Uterus (tissue), 4 donors: ENCODE measurements at regions of chr2 and their contacts with region 1.

Region 1: GRCh38 chr2:28566521-28567041 is 70.7 kb downstream of the PLB1 start:
- DNase-seq: peak; percentile 82 to 90
- H3K4me3 ChIP-seq: peak overlapping the region; percentile 43 to 52
- H3K27ac ChIP-seq: peak overlapping the region; percentile 83 to 84
- H3K4me1 ChIP-seq: no peaks in the 10 kb centered on the region
- H3K27me3 ChIP-seq: no peaks in the 10 kb centered on the region
- CTCF ChIP-seq: peak; percentile 100
- POLR2A ChIP-seq: peak in 1 of 2 donors; percentile 51

Region 2: DNA sequence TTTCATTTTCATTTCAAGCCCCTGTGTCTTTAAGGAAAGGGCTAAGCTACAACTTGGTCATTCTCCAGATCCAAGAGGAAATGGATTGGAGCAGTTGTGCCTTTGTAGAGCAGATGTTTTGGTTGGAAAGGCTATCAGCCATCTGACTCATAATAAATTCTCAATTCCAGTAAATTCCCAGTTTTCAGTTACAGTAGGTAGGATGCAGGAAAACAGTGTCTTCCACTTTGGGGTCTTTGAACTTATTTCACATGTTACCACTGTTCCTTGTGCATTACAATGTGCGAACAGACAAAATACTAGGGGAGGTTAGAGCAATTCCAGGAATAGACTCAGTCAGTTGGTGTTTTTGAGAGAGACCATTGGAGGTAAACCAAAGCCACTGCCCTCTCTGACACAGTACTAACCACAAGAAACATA is 464.1 kb before region 1 on chr2:
- intact Hi-C with region 1: no loop called
- DNase-seq: no peak
- H3K4me3 ChIP-seq: no peak overlapping the region
- H3K27ac ChIP-seq: peak overlapping the region; percentile 40 to 60
- H3K4me1 ChIP-seq: peaks cover 0 to 4% of the 10 kb centered on the region in 2 donors
- H3K27me3 ChIP-seq: no peaks in the 10 kb centered on the region
- CTCF ChIP-seq: no peak
- POLR2A ChIP-seq: no peak

Region 3: GRCh38 chr2:28594289-28595108 is 27.9 kb after region 1 on chr2:
- intact Hi-C with region 1: loop called (anchors 2 kb)
- DNase-seq: peak; percentile 92 to 96
- H3K4me3 ChIP-seq: no peak overlapping the region
- H3K27ac ChIP-seq: peak overlapping the region; percentile 94 to 98
- H3K4me1 ChIP-seq: no peaks in the 10 kb centered on the region
- H3K27me3 ChIP-seq: no peaks in the 10 kb centered on the region
- CTCF ChIP-seq: peak; percentile 88 to 92 (median 90)
- POLR2A ChIP-seq: peak in 1 of 2 donors; percentile 48

Region 4: GRCh38 chr2:28810384-28811285 is 244.1 kb after region 1 on chr2 and contains the start of gene SPDYA:
- intact Hi-C with region 1: loop called (anchors 10 kb)
- DNase-seq: peak; percentile 58 to 72
- H3K4me3 ChIP-seq: peak within 1 kb of the TSS; percentile 29 to 37
- H3K27ac ChIP-seq: peak within 1 kb of the TSS; percentile 23 to 24
- H3K4me1 ChIP-seq: no peaks in the 10 kb centered on the region
- H3K27me3 ChIP-seq: no peaks in the 10 kb centered on the region
- CTCF ChIP-seq: no peak
- POLR2A ChIP-seq: peak in 1 of 2 donors; percentile 20
- total RNA-seq, gene SPDYA: 3.2 to 7.3 TPM in 2 of 4 donors, not detected in the others

Region 5: DNA sequence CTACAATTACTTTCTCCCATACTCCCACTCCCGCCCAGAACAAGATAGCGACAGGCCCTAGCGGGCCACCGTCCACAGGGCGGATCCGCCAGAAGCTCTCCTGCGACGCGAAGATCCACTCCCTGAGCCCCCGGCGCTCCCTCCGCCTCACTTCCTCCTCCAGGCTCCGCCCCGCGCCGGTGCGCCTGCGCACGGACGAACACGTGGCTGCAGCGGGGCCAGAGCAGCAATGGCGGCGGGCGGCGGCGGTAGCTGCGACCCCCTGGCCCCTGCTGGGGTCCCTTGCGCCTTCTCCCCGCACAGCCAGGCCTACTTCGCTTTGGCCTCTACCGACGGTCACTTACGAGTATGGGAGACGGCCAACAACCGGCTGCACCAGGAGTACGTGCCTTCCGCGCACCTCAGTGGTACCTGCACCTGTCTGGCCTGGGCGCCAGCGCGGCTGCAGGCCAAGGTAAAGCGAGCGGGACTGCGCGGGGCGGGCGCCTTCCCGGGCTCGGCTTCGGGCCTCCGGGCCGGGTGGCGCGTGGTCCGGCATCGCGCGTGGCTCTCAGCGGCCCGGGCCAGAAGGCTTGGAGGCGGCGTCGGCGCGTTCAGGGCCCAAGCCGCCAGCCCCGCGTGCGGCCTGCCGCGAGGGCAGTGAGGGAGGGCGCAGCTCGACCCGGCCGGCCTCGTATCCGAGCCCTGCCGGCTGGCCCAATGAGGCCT is 328.0 kb after region 1 on chr2 and contains the start of gene WDR43:
- intact Hi-C with region 1: loop called (anchors 10 kb)
- DNase-seq: peak; percentile 95 to 97
- H3K4me3 ChIP-seq: peak within 1 kb of the TSS; percentile 71 to 99
- H3K27ac ChIP-seq: peak within 1 kb of the TSS; percentile 74 to 86
- H3K4me1 ChIP-seq: peaks cover 0 to 7% of the 10 kb centered on the region in 2 donors
- H3K27me3 ChIP-seq: no peaks in the 10 kb centered on the region
- CTCF ChIP-seq: peak in 1 of 4 experiments; percentile 39
- POLR2A ChIP-seq: peak in 1 of 2 donors; percentile 75
- total RNA-seq, gene WDR43: 42.9 to 82.2 (median 74.6) TPM